ENCODE measurements at regions of chr2 and their contacts with region 1.

Region 1: DNA sequence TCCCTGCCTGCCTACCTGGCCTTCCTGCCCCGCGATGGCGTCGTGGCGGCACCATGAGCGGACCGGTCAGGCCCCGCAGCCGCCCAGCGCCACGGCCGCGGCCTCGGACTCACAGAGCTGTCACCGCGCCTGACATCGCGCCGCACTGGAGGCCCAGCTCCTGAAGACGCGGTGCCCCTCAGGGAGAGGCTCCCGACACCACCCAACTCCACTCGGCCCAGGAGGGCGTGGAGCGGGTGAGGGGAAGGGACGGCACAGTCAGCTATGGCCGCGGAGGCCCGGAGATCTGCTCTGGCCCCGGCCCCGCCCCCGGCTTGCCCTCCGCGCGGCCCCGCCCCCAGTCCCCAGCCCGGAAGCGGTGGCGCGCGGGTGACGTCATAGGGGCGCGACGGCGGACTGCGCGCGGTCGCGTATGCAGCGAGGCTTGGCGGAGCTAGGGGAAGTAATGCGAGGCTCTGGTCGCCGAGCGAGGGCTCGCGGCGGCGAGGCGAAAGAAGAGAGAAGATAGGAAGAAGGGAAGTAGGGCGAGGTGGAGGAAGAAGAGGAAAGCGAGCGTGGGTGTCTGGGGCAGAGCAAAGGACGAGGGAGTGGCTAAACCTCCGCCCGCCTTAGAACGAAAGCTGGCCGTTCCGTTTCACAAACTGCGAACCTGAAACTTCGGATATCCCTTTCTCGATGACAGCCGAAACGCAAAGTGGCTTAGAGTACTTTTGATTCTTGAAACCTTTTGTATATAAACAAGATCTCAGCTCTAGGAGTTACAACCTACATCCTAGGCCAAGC is at the start of gene SLC35F5:
- DNase-seq: peak; percentile 95 to 97
- ATAC-seq: peak; percentile 100
- H3K4me3 ChIP-seq: peak within 1 kb of the TSS; percentile 59 to 79
- H3K27ac ChIP-seq: peak within 1 kb of the TSS; percentile 68 to 86
- H3K4me1 ChIP-seq: no peaks in the 10 kb centered on the region
- H3K27me3 ChIP-seq: no peaks in the 10 kb centered on the region
- total RNA-seq, gene SLC35F5: 73.5 to 82.4 TPM

Region 2: GRCh38 chr2:113965644-113966043 is 209.1 kb after region 1 on chr2:
- intact Hi-C with region 1: loop called in 1 of 2 experiments (anchors 10 kb)
- DNase-seq: no peak
- ATAC-seq: no peak
- H3K4me3 ChIP-seq: no peak overlapping the region
- H3K27ac ChIP-seq: no peak overlapping the region
- H3K4me1 ChIP-seq: peaks cover 0 to 10% of the 10 kb centered on the region in 2 donors
- H3K27me3 ChIP-seq: no peaks in the 10 kb centered on the region

Region 3: DNA sequence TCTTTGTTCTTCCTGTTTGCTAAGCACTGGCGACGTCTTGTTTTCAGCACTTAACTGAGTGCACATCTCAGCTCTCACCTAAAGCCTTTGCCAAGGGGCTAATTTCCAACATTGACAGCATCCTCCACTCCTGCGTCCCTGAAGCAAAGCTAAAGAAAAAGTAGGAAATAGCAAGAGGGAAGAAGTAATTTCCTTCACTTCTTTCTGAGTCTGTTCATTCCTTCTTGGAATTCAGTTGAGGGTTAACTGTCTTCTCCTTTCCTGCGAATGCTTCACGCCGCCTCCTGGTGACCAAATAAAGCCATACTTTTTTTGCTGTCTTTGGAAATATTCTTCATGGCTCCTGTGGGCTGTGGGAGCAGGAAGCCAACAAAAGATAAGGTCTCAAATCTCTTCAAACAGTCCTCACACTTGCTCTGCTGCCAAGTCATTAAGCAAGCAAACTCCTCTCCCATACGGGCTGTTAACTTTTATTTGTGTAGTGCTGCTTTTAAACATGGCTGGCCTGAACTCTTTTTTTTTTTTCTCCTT is 786.8 kb after region 1 on chr2:
- intact Hi-C with region 1: loop called in 1 of 2 experiments (anchors 10 kb)
- DNase-seq: peak in 1 of 2 donors; percentile 61
- ATAC-seq: peak; percentile 87
- H3K4me3 ChIP-seq: peak overlapping the region in 1 of 2 donors; percentile 11
- H3K27ac ChIP-seq: peak overlapping the region; percentile 67 to 77
- H3K4me1 ChIP-seq: no peaks in the 10 kb centered on the region
- H3K27me3 ChIP-seq: no peaks in the 10 kb centered on the region

Measured in aorta (tissue), 5 donors.